K562 (cell line): ENCODE measurements at regions of chr4 and their contacts with region 1.

Region 1: DNA sequence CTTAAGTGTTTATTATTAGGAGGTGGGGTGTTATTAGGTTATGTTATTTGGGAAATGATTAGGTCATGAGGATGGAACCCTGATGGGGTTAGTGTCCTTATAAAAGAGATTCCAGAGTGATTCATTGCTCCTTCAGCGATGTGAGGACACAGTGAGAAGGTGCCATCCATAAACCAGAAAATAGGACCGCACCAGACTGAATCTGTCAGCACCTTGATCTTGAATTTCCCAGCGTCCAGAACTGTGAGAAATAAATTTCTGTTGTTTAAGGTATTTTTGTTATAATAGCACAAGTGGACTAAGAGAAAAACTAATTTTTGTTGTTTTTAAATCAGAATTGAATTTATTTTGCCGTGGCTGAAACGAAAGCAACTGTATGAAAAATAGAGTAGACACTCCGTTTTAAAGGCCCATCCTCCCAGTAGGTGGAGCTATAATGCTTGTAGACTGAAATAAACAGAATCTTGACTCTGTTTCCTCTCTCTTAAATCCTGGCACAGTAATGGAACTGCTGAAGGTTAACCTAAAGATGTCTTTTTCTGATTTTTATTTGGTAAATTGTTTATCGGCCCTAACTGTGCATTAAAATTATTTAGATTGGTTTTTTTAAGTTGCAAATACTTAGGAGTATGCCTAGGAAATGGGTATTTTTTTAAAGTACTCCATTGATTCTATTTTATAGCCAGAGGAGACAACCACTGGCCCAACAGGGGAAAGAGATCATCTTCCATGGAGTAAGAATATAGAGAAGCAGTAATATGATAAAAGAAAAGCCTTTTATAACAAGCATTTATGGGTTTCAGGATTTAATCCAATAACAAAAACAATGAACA is 133.2 kb upstream of the ADAMTS3 start:
- DNase-seq: peak; percentile 33 to 77 (median 53)
- ATAC-seq: peak; percentile 82
- H3K4me3 ChIP-seq: peak overlapping the region; percentile 34
- H3K27ac ChIP-seq: no peak overlapping the region
- H3K4me1 ChIP-seq: peaks cover 0 to 28% of the 10 kb centered on the region in 2 experiments; a peak in 3 of 5 replicates
- H3K27me3 ChIP-seq: no peaks in the 10 kb centered on the region
- CTCF ChIP-seq: peak; percentile 58 to 79 (median 64); a peak in 5 of 6 replicates
- EP300 ChIP-seq: no peak
- POLR2A ChIP-seq: no peak
- RAD21 ChIP-seq: peak; percentile 84 to 87

Region 2: GRCh38 chr4:72295966-72296557 is 406.1 kb before region 1 on chr4:
- CTCF ChIA-PET with region 1: no interaction called
- POLR2A ChIA-PET with region 1: no interaction called
- in situ Hi-C with region 1: no loop called
- intact Hi-C with region 1: loop called (anchors 10 kb)
- DNase-seq: peak; percentile 34 to 46 (median 40)
- ATAC-seq: peak; percentile 93
- H3K4me3 ChIP-seq: no peak overlapping the region
- H3K27ac ChIP-seq: no peak overlapping the region
- H3K4me1 ChIP-seq: no peaks in the 10 kb centered on the region
- H3K27me3 ChIP-seq: no peaks in the 10 kb centered on the region
- CTCF ChIP-seq: peak; percentile 42 to 69 (median 55); a peak in 5 of 6 replicates
- EP300 ChIP-seq: no peak
- POLR2A ChIP-seq: no peak
- RAD21 ChIP-seq: peak; percentile 66 to 70

Region 3: GRCh38 chr4:72505314-72505744 is 196.9 kb before region 1 on chr4:
- CTCF ChIA-PET with region 1: no interaction called
- POLR2A ChIA-PET with region 1: no interaction called
- in situ Hi-C with region 1: no loop called
- intact Hi-C with region 1: loop called (anchors 5 kb)
- DNase-seq: peak; percentile 22 to 57 (median 38)
- ATAC-seq: peak; percentile 96
- H3K4me3 ChIP-seq: no peak overlapping the region
- H3K27ac ChIP-seq: no peak overlapping the region
- H3K4me1 ChIP-seq: no peaks in the 10 kb centered on the region
- H3K27me3 ChIP-seq: no peaks in the 10 kb centered on the region
- CTCF ChIP-seq: peak; percentile 63 to 75 (median 68)
- EP300 ChIP-seq: no peak
- POLR2A ChIP-seq: no peak
- RAD21 ChIP-seq: peak; percentile 66 to 86

Region 4: DNA sequence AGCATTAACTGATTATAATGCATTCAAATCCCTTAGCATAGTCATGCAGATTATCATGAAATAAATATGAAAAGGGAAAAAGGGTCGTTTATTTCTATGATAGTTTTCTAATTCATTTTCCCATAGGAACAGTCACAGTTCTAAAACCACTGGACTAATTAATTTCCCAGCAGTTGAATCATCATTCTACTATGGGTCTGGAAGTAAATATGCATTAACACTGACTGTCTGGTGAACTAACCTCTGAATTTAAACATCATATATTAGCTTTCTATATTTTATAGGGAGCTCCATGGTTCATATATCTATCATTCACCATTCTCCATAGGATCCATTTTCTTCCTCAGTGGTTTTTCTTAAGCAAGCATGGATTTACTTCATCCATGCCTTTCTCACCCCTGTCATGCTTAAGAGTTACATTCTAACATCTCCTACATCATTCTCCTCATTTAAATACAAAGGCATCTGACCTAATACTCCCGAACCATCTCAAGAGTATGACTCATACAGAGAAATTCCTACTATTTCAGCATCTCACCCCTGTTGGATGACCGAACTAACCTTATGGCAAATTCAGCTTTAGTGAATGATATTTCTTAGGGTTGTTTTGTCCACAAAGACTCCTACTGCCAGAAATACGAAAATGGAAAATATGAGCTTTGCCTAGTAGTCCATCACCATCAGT is 65.6 kb after region 1 on chr4:
- CTCF ChIA-PET with region 1: no interaction called
- POLR2A ChIA-PET with region 1: no interaction called
- in situ Hi-C with region 1: no loop called
- intact Hi-C with region 1: loop called (anchors 2 kb)
- DNase-seq: no peak
- ATAC-seq: no peak
- H3K4me3 ChIP-seq: no peak overlapping the region
- H3K27ac ChIP-seq: no peak overlapping the region
- H3K4me1 ChIP-seq: peaks cover 0 to 6% of the 10 kb centered on the region in 2 experiments; a peak in 1 of 5 replicates
- H3K27me3 ChIP-seq: no peaks in the 10 kb centered on the region
- CTCF ChIP-seq: no peak
- EP300 ChIP-seq: no peak
- POLR2A ChIP-seq: no peak
- RAD21 ChIP-seq: no peak

Region 5: DNA sequence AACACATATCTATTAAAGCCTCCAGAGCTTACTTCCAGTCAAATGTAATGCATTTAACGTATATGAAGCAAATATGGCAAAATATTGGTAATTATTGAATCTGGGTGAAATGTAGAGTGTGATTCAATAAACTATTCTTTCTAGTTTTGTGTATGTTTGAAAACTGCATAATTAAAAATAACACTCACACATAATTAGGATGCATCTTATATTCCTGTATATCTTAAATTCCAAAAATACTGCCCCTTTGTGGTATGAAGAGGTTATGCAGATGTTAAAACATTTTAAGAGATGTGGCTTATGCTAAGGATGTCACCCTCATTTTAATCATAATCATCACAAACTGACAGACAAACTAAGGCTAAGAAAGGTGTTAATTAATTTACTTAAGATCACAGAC is 184.4 kb after region 1 on chr4:
- CTCF ChIA-PET with region 1: no interaction called
- POLR2A ChIA-PET with region 1: no interaction called
- in situ Hi-C with region 1: no loop called
- intact Hi-C with region 1: loop called (anchors 5 kb)
- DNase-seq: peak in 3 of 4 experiments; percentile 9 to 13 (median 10)
- ATAC-seq: 0 out of 3 replicates have a peak, but pooled peaks have one; percentile 45
- H3K4me3 ChIP-seq: no peak overlapping the region
- H3K27ac ChIP-seq: no peak overlapping the region
- H3K4me1 ChIP-seq: no peaks in the 10 kb centered on the region
- H3K27me3 ChIP-seq: no peaks in the 10 kb centered on the region
- CTCF ChIP-seq: peak in 2 of 3 experiments; percentile 13 to 50; a peak in 2 of 6 replicates
- EP300 ChIP-seq: no peak
- POLR2A ChIP-seq: no peak
- RAD21 ChIP-seq: peak in 1 of 2 experiments; percentile 52; a peak in 2 of 4 replicates

Region 6: GRCh38 chr4:73828956-73829355 is 1126.8 kb after region 1 on chr4:
- CTCF ChIA-PET with region 1: no interaction called
- POLR2A ChIA-PET with region 1: no interaction called
- in situ Hi-C with region 1: no loop called
- intact Hi-C with region 1: no loop called
- DNase-seq: no peak
- ATAC-seq: no peak
- H3K4me3 ChIP-seq: no peak overlapping the region
- H3K27ac ChIP-seq: no peak overlapping the region
- H3K4me1 ChIP-seq: peaks cover 0 to 18% of the 10 kb centered on the region in 2 experiments; a peak in 2 of 5 replicates
- H3K27me3 ChIP-seq: no peaks in the 10 kb centered on the region
- CTCF ChIP-seq: no peak
- EP300 ChIP-seq: no peak
- POLR2A ChIP-seq: no peak
- RAD21 ChIP-seq: no peak